Ascending aorta (tissue), 2 donors: ENCODE measurements at regions of chr2 and their contacts with region 1.

Region 1: GRCh38 chr2:97806738-97807618 is 93.6 kb downstream of the ZAP70 start:
- DNase-seq: peak; percentile 27 to 89
- H3K4me3 ChIP-seq: no peak overlapping the region
- H3K27ac ChIP-seq: peak overlapping the region in 1 of 2 donors; percentile 3
- H3K4me1 ChIP-seq: no peaks in the 10 kb centered on the region
- H3K27me3 ChIP-seq: no peaks in the 10 kb centered on the region
- CTCF ChIP-seq: peak; percentile 83 to 90 (median 89)

Region 2: DNA sequence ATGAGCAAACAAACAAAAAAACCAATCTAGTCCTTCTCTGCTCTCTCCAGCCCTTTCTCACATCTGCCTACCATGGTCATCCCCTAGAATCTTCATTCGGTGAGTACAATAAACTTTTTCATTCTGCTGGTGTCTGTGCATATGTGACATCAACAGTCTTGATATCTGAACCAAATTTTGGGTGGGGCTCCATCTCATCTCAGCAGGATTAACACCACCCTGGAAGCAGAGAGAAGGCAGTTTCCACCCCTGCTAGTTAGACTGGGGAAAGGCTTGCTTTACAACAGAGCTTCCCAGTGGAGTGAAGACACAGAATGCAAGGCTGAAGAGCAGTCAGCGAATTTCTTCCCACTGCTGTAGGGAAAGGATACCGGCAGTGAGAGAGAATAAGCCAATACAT is 71.9 kb after region 1 on chr2:
- intact Hi-C with region 1: no loop called
- DNase-seq: no peak
- H3K4me3 ChIP-seq: no peak overlapping the region
- H3K27ac ChIP-seq: no peak overlapping the region
- H3K4me1 ChIP-seq: no peaks in the 10 kb centered on the region
- H3K27me3 ChIP-seq: no peaks in the 10 kb centered on the region
- CTCF ChIP-seq: no peak

Region 3: GRCh38 chr2:97890093-97890492 is 83.1 kb after region 1 on chr2:
- intact Hi-C with region 1: no loop called
- DNase-seq: no peak
- H3K4me3 ChIP-seq: no peak overlapping the region
- H3K27ac ChIP-seq: no peak overlapping the region
- H3K4me1 ChIP-seq: no peaks in the 10 kb centered on the region
- H3K27me3 ChIP-seq: no peaks in the 10 kb centered on the region
- CTCF ChIP-seq: no peak

Region 4: DNA sequence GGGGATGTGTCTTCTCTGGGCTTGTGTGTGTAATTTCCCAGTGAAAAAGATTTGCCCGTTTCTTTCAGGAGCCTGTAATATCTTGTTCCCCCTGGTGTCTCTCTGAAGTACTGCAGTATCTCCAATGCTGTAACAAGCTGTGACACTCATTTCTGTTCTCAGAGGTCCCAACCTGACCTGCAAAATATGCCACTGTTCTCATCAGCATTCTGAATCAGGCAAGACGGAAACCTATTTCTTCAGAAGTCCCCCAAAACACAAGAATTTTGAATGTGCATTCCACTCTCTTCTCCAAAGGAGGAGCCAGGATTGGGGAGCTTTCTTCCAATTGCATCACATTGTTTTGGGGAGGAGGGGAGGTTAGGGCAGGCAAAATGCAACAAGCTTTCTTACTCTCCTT is 462.3 kb after region 1 on chr2:
- intact Hi-C with region 1: loop called (anchors 1 kb)
- DNase-seq: no peak
- H3K4me3 ChIP-seq: no peak overlapping the region
- H3K27ac ChIP-seq: peak overlapping the region; percentile 62 to 65
- H3K4me1 ChIP-seq: peaks cover 0 to 4% of the 10 kb centered on the region in 2 donors
- H3K27me3 ChIP-seq: no peaks in the 10 kb centered on the region
- CTCF ChIP-seq: peak; percentile 39 to 74 (median 63)

Region 5: GRCh38 chr2:98334439-98335078 is 527.6 kb after region 1 on chr2:
- intact Hi-C with region 1: loop called (anchors 5 kb)
- DNase-seq: no peak
- H3K4me3 ChIP-seq: no peak overlapping the region
- H3K27ac ChIP-seq: peak overlapping the region; percentile 52 to 57
- H3K4me1 ChIP-seq: peaks cover 4 to 5% of the 10 kb centered on the region in 2 donors
- H3K27me3 ChIP-seq: no peaks in the 10 kb centered on the region
- CTCF ChIP-seq: no peak

Region 6: GRCh38 chr2:98385050-98385699 is 578.2 kb after region 1 on chr2:
- intact Hi-C with region 1: loop called (anchors 1 kb)
- DNase-seq: peak in 1 of 2 donors; percentile 78
- H3K4me3 ChIP-seq: no peak overlapping the region
- H3K27ac ChIP-seq: no peak overlapping the region
- H3K4me1 ChIP-seq: no peaks in the 10 kb centered on the region
- H3K27me3 ChIP-seq: no peaks in the 10 kb centered on the region
- CTCF ChIP-seq: peak; percentile 86 to 92 (median 90)